B cell (primary cell): ENCODE measurements at regions of chr3 and their contacts with region 1.

Region 1: GRCh38 chr3:19994796-19995195 is 17.3 kb downstream of the PP2D1 start:
- DNase-seq: no peak
- ATAC-seq: no peak
- H3K4me3 ChIP-seq: no peak overlapping the region
- H3K4me3 Mint-ChIP-seq: no peak overlapping the region
- H3K27ac ChIP-seq: no peak overlapping the region
- H3K27ac Mint-ChIP-seq: no peak overlapping the region
- H3K4me1 ChIP-seq: no peaks in the 10 kb centered on the region
- H3K4me1 Mint-ChIP-seq: no peaks in the 10 kb centered on the region
- H3K27me3 ChIP-seq: no peaks in the 10 kb centered on the region
- H3K27me3 Mint-ChIP-seq: no peaks in the 10 kb centered on the region
- CTCF ChIP-seq: no peak

Region 2: DNA sequence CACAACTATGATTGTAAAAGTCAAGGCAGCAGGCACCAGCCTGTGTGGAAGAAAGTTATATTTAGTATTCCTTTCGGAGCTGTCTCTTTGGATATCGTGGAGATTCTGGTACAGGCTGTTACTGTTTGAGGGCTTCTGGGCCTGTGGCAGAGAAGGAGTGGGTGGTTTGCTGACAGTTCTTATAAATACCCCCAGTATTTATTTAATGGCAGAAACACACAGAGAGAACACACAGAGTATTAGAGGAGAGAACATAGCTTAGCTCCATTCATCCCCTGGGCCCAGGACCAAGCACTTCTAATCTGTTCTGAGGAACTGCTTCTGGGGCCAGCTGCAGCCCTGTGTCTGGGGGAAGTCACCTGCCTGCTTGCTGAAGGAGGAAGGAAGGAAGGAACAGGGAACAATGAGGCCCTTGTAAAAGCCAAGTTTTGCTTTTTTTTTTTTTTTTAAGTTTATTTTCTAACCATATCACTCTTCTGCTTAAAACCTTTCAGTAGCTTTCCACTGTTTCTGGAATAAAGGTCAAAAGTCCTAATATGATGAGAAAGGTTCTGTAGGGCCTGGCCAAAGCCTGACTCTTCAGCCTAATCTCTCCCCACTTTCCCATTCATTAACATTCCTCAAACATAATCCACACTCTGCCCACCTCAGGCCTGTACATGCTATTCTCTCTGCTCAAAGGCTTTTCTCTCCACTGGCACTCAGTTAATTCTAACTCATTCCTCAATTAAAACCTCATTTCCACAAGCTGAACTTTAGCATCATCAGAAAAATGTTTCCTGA is 29.0 kb after region 1 on chr3:
- CTCF ChIA-PET with region 1: no interaction called
- POLR2A ChIA-PET with region 1: no interaction called
- intact Hi-C with region 1: loop called (anchors 2 kb)
- DNase-seq: peak; percentile 12
- ATAC-seq: no peak
- H3K4me3 ChIP-seq: no peak overlapping the region
- H3K4me3 Mint-ChIP-seq: no peak overlapping the region
- H3K27ac ChIP-seq: no peak overlapping the region
- H3K27ac Mint-ChIP-seq: no peak overlapping the region
- H3K4me1 ChIP-seq: peaks cover 7 to 9% of the 10 kb centered on the region in 2 donors
- H3K4me1 Mint-ChIP-seq: peaks cover 8% of the 10 kb centered on the region
- H3K27me3 ChIP-seq: no peaks in the 10 kb centered on the region
- H3K27me3 Mint-ChIP-seq: no peaks in the 10 kb centered on the region
- CTCF ChIP-seq: no peak

Region 3: GRCh38 chr3:20288050-20288449 is 293.3 kb after region 1 on chr3:
- CTCF ChIA-PET with region 1: no interaction called
- POLR2A ChIA-PET with region 1: no interaction called
- intact Hi-C with region 1: no loop called
- DNase-seq: no peak
- ATAC-seq: no peak
- H3K4me3 ChIP-seq: no peak overlapping the region
- H3K4me3 Mint-ChIP-seq: no peak overlapping the region
- H3K27ac ChIP-seq: no peak overlapping the region
- H3K27ac Mint-ChIP-seq: no peak overlapping the region
- H3K4me1 ChIP-seq: no peaks in the 10 kb centered on the region
- H3K4me1 Mint-ChIP-seq: no peaks in the 10 kb centered on the region
- H3K27me3 ChIP-seq: no peaks in the 10 kb centered on the region
- H3K27me3 Mint-ChIP-seq: no peaks in the 10 kb centered on the region
- CTCF ChIP-seq: no peak